Vagina (tissue), 2 donors: ENCODE measurements at regions of chr5 and their contacts with region 1.

Region 1: DNA sequence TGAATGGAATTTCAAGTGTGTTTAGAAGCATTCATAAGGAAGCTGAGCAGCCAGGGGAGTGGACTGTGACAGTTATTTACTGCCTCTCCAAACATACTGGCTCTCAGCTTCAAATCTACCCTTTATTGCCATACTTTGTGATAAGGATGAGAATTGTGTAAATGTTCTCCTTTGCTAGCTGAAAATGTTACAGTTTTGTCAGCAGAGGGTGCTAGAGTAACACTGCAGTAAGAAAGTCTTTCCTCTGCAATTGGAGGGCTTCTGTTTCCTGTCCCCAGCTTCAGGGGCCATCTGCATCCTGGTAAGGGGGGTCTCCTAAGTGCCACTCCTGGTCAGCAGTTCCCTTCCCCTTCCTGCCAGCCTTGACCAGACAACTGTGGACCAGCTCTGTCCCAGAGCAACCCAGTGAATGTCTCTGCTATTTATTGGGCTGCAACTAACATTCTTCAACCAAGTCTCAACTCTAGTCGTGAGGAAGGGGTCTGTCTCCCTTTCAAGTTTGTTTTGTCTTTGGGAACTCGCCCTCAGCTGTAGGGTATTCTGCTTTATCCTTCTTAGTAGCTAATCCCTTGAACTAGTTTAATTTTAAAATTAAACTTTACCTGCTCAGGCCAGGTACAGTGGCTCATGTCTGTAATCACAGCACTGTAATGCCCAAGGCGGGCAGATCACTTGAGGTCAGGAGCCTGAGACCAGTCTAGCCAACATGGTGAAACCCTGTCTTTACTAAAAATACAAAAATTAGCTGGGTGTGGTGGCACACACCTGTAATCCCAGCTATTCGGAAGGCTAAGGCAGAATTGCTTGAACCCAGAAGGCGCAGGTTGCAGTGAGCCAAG is 45.3 kb downstream of the RAPGEF6 start:
- DNase-seq: no peak
- H3K4me3 ChIP-seq: no peak overlapping the region
- H3K27ac ChIP-seq: no peak overlapping the region
- H3K4me1 ChIP-seq: no peaks in the 10 kb centered on the region
- H3K27me3 ChIP-seq: no peaks in the 10 kb centered on the region
- CTCF ChIP-seq: peak; percentile 52 to 83 (median 75)
- POLR2A ChIP-seq: no peak

Region 2: GRCh38 chr5:132003170-132003744 is 413.5 kb after region 1 on chr5:
- intact Hi-C with region 1: loop called (anchors 5 kb)
- DNase-seq: no peak
- H3K4me3 ChIP-seq: no peak overlapping the region
- H3K27ac ChIP-seq: no peak overlapping the region
- H3K4me1 ChIP-seq: no peaks in the 10 kb centered on the region
- H3K27me3 ChIP-seq: no peaks in the 10 kb centered on the region
- CTCF ChIP-seq: no peak
- POLR2A ChIP-seq: no peak

Region 3: GRCh38 chr5:133179405-133179804 is 1589.7 kb after region 1 on chr5:
- intact Hi-C with region 1: no loop called
- DNase-seq: no peak
- H3K4me3 ChIP-seq: no peak overlapping the region
- H3K27ac ChIP-seq: no peak overlapping the region
- H3K4me1 ChIP-seq: no peaks in the 10 kb centered on the region
- H3K27me3 ChIP-seq: no peaks in the 10 kb centered on the region
- CTCF ChIP-seq: no peak
- POLR2A ChIP-seq: no peak